Motor neuron (in vitro differentiated cells): ENCODE measurements at regions of chr2 and their contacts with region 1.

Region 1: GRCh38 chr2:235746257-235747084 is 252.6 kb downstream of the AGAP1 start:
- ATAC-seq: peak; percentile 82 to 97 (median 94)
- H3K4me3 ChIP-seq: no peak overlapping the region
- H3K27ac ChIP-seq: no peak overlapping the region
- H3K4me1 ChIP-seq: no peaks in the 10 kb centered on the region

Region 2: DNA sequence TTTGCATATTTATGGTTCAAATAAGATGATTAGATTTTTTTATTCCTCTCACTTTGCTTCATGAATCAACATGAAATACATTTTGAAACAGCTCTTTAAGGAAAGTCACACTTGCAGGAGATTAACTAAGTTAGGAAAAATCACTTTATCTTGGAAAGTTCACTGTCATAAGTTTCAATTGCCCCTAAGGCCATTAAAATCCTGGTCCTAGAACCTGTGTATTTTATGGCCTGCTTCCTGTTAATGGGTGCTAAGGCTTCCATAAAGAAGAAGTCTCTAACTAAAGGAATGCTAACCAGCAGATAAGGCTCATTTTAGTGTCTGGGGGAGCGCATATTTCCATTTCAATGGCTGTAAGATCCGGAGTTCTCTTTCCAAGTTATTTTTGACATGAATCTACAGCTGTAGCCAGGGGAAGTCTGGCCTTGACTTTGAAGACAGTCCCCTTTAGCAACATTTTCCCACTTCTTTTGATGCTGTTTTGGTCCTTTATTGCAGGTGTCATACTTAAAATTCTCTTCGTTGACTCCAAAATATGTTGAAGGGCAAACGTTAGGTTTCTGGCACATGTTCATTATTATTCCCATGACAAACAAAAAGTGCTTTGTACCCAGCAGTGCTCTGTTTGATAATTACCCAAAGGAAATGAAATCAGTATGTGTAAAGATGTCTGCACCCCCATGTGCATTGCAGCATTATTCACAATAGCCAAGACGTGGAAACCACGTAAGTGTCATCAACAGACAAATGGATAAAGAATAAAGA is 829.1 kb before region 1 on chr2:
- in situ Hi-C with region 1: no loop called
- ATAC-seq: no peak
- H3K4me3 ChIP-seq: no peak overlapping the region
- H3K27ac ChIP-seq: no peak overlapping the region
- H3K4me1 ChIP-seq: peaks cover 4 to 5% of the 10 kb centered on the region in 2 donors

Region 3: DNA sequence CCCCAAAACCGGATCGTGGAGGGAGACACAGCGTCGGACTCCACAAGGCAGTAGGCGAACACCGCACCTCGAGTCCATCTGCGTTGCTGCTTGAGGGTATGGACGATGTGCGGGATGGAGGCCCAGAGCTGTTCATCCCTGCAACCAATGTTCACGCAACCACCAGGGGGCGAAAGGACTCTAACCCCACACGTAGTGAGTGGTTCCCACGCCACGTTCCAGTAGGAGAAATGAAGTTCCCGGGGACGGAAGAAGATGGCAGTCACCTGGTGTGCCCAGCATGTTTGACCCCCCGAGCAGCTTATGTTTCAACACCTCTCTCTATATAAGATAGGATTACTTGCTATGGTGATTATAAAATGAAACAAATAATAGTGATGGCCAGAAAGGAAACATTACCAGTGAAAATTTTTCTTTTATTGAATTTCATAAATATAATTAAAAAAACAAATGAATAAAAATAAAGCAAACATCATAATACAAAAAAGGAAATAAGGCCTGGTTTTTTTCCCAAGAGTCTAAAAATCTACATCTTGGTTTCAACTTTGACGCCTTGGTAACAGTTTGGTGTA is 610.4 kb before region 1 on chr2:
- in situ Hi-C with region 1: loop called in 4 of 9 experiments (anchors 10 to 25 kb)
- ATAC-seq: peak; percentile 56 to 100 (median 75)
- H3K4me3 ChIP-seq: no peak overlapping the region
- H3K27ac ChIP-seq: no peak overlapping the region
- H3K4me1 ChIP-seq: peaks cover 0 to 3% of the 10 kb centered on the region in 2 donors

Region 4: GRCh38 chr2:235170536-235171521 is 575.6 kb before region 1 on chr2:
- in situ Hi-C with region 1: loop called in 1 of 9 experiments (anchors 25 kb)
- ATAC-seq: peak; percentile 73 to 99 (median 84)
- H3K4me3 ChIP-seq: no peak overlapping the region
- H3K27ac ChIP-seq: no peak overlapping the region
- H3K4me1 ChIP-seq: peaks cover 3 to 17% of the 10 kb centered on the region in 2 donors

Region 5: DNA sequence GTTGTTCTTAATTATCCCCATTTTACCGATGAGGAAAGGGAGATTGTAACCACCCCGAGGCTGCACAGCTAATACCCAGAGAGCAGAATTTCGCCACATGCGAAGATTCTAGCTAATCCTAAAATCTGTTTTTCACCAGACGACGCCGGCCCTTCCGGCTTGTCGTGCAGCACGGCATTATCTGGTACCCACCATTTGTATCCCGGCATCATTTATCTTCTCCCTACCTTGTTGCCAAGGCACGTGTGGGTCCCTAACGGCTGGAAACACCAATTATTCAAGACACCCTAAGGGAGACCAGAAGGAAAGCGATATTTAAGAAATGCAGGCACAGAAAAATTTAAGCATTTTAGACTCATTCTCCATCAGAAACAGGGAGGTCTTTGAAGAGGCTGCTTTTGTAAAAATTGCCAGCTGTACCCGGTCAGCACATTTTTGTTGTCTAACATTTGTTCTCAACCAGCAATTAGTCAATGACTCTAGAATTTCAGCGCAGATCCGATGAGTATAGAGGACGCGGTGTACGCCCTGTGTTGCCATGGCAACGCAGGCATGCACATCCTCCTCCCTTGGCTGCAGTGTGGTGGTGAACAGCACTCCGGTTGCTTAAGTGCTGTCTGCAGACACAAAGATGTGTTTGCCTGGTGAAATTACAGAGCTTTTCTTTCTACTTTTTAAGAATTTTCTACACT is 141.0 kb before region 1 on chr2:
- in situ Hi-C with region 1: loop called in 5 of 9 experiments (anchors 10 to 25 kb)
- ATAC-seq: peak; percentile 98 to 100 (median 100)
- H3K4me3 ChIP-seq: peak overlapping the region; percentile 10 to 25 (median 23)
- H3K27ac ChIP-seq: peak overlapping the region in 1 of 2 donors; percentile 53
- H3K4me1 ChIP-seq: peaks cover 24 to 35% of the 10 kb centered on the region in 2 donors